ENCODE measurements at regions of chr4 and their contacts with region 1.

Region 1: GRCh38 chr4:121252224-121252806 is 88.2 kb upstream of the TNIP3 start:
- DNase-seq: peak; percentile 50
- H3K4me3 ChIP-seq: no peak overlapping the region
- H3K27ac ChIP-seq: no peak overlapping the region
- H3K27me3 ChIP-seq: peaks cover 3% of the 10 kb centered on the region
- CTCF ChIP-seq: peak; percentile 89

Region 2: GRCh38 chr4:121168446-121169281 is 83.7 kb before region 1 on chr4:
- CTCF ChIA-PET with region 1: no interaction called
- POLR2A ChIA-PET with region 1: no interaction called
- DNase-seq: no peak
- H3K4me3 ChIP-seq: no peak overlapping the region
- H3K27ac ChIP-seq: no peak overlapping the region
- H3K27me3 ChIP-seq: no peaks in the 10 kb centered on the region
- CTCF ChIP-seq: no peak

Region 3: GRCh38 chr4:121199742-121200561 is 52.4 kb before region 1 on chr4:
- CTCF ChIA-PET with region 1: interaction called, 20 read pairs
- POLR2A ChIA-PET with region 1: no interaction called
- DNase-seq: no peak
- H3K4me3 ChIP-seq: no peak overlapping the region
- H3K27ac ChIP-seq: no peak overlapping the region
- H3K27me3 ChIP-seq: no peaks in the 10 kb centered on the region
- CTCF ChIP-seq: no peak

Region 4: GRCh38 chr4:121272526-121272925 is 20.2 kb after region 1 on chr4:
- CTCF ChIA-PET with region 1: interaction called, 17 read pairs
- POLR2A ChIA-PET with region 1: no interaction called
- DNase-seq: peak; percentile 24
- H3K4me3 ChIP-seq: no peak overlapping the region
- H3K27ac ChIP-seq: no peak overlapping the region
- H3K27me3 ChIP-seq: no peaks in the 10 kb centered on the region
- CTCF ChIP-seq: no peak

Measured in AG04450 (cell line).